Heart right ventricle (tissue), 16 donors: ENCODE measurements at regions of chr3 and their contacts with region 1.

Region 1: GRCh38 chr3:169041677-169042171 is 621.8 kb downstream of the MECOM start:
- DNase-seq: no peak
- ATAC-seq: peak in 6 of 8 donors; percentile 20 to 79 (median 68)
- H3K4me3 ChIP-seq: peak overlapping the region in 3 of 10 donors; percentile 11 to 24 (median 13)
- H3K27ac ChIP-seq: peak overlapping the region in 6 of 10 donors; percentile 10 to 38 (median 27)
- H3K4me1 ChIP-seq: peaks cover 0 to 7% (median 0%) of the 10 kb centered on the region in 9 donors
- H3K27me3 ChIP-seq: no peaks in the 10 kb centered on the region
- CTCF ChIP-seq: peak; percentile 27 to 75 (median 59)

Region 2: GRCh38 chr3:168865022-168865551 is 176.6 kb before region 1 on chr3:
- intact Hi-C with region 1: loop called in 1 of 10 experiments (anchors 5 kb)
- DNase-seq: no peak
- ATAC-seq: no peak
- H3K4me3 ChIP-seq: peak overlapping the region in 5 of 10 donors; percentile 13 to 37 (median 23)
- H3K27ac ChIP-seq: peak overlapping the region in 1 of 10 donors; percentile 36
- H3K4me1 ChIP-seq: peaks cover 0 to 4% (median 0%) of the 10 kb centered on the region in 9 donors
- H3K27me3 ChIP-seq: no peaks in the 10 kb centered on the region
- CTCF ChIP-seq: peak; percentile 62 to 84 (median 73)

Region 3: DNA sequence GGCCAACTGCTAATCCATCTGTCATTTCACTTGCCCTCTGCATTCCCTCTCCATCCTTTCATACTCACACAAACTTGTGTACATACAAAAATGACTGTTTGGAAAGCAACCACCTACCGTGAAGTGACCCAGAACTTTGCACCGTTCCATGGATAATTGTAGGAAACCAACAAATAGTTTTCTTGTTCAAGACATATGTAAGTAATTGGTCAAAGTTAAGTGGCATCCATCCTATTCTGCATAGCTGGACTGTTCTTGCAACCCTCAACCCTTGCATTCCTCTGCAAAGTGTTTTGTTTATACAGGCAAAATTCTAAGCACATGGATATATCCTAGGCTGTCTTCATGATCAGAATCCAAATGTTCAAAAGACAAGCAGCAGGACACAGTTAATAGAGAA is 29.3 kb after region 1 on chr3:
- intact Hi-C with region 1: no loop called
- DNase-seq: no peak
- ATAC-seq: no peak
- H3K4me3 ChIP-seq: no peak overlapping the region
- H3K27ac ChIP-seq: no peak overlapping the region
- H3K4me1 ChIP-seq: no peaks in the 10 kb centered on the region
- H3K27me3 ChIP-seq: no peaks in the 10 kb centered on the region
- CTCF ChIP-seq: no peak

Region 4: GRCh38 chr3:169133178-169134161 is 91.7 kb after region 1 on chr3:
- intact Hi-C with region 1: loop called in 1 of 10 experiments (anchors 5 kb)
- DNase-seq: no peak
- ATAC-seq: peak in 7 of 8 donors; percentile 33 to 83 (median 74)
- H3K4me3 ChIP-seq: peak overlapping the region in 2 of 10 donors; percentile 9 to 22
- H3K27ac ChIP-seq: peak overlapping the region in 7 of 10 donors; percentile 32 to 93 (median 59)
- H3K4me1 ChIP-seq: peaks cover 0 to 68% (median 7%) of the 10 kb centered on the region in 9 donors
- H3K27me3 ChIP-seq: peaks cover 0 to 18% (median 4%) of the 10 kb centered on the region in 7 donors
- CTCF ChIP-seq: peak; percentile 12 to 66 (median 48)

Region 5: GRCh38 chr3:169744366-169745054 is 702.8 kb after region 1 on chr3:
- intact Hi-C with region 1: loop called in 4 of 10 experiments (anchors 10 kb)
- DNase-seq: no peak
- ATAC-seq: peak in 2 of 8 donors; percentile 39 to 52
- H3K4me3 ChIP-seq: no peak overlapping the region
- H3K27ac ChIP-seq: no peak overlapping the region
- H3K4me1 ChIP-seq: peaks cover 0 to 3% (median 0%) of the 10 kb centered on the region in 9 donors
- H3K27me3 ChIP-seq: peaks cover 0 to 26% (median 5%) of the 10 kb centered on the region in 7 donors
- CTCF ChIP-seq: peak; percentile 12 to 72 (median 52)